Activated naive CD4-positive, alpha-beta T cell treated with anti-CD3 and anti-CD28 coated beads, Interleukin-2, amount 10 ng/mL, durations not matched to agents 7 days and 5 days (primary cell): ENCODE measurements at regions of chr3 and their contacts with region 1.

Region 1: DNA sequence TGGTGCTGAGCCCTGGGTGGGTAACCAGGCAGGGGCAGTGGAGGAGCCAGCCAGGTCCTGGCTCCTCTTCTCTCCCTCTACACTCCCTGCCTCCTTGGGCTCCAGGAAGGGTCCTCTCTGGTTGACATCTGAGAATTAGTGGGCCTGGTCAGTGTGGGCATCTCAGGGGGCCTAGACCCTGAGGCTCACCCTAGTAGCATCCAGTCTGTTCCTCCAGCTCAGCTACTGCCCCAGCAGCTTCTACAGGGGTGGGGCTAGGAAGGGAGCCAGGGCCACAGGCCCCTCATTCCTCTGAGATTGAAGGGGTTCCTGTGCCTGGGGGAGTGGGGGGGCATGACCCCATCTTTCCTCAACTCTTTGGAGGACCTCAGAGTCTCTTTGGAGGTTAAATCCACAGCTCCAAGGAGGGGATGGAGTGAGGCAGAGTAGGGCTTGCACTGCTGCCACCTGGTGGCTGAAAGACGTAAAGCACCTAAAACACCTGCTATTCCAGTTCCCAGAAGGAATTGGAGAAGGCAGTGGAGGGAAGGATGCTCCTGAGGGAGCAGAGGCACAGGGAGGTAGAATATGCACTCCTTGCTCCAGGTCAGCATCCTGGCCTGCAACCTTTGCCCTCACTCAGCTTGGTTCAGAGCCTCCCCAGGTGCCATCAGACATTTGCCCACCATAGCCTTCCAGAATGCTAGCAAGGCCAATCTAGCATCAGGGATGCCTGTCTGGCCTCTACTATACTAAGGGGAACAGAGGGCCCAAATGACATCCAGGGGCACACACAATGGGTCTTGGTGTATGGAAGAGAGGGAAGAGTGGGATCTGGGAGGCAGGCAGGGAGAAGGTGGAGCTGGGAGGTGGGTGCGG is 25.1 kb downstream of the C3orf18 start:
- DNase-seq: peak; percentile 72
- H3K4me3 Mint-ChIP-seq: no peak overlapping the region
- H3K27ac Mint-ChIP-seq: no peak overlapping the region
- H3K4me1 Mint-ChIP-seq: no peaks in the 10 kb centered on the region
- H3K27me3 Mint-ChIP-seq: peaks cover 69% of the 10 kb centered on the region

Region 2: GRCh38 chr3:50345586-50346235 is 196.7 kb before region 1 on chr3 and contains the start of gene ZMYND10:
- CTCF ChIA-PET with region 1: interaction called, 25 read pairs
- DNase-seq: peak; percentile 87
- H3K4me3 Mint-ChIP-seq: peak within 1 kb of the TSS; percentile 72
- H3K27ac Mint-ChIP-seq: peak within 1 kb of the TSS; percentile 80
- H3K4me1 Mint-ChIP-seq: peaks cover 81% of the 10 kb centered on the region
- H3K27me3 Mint-ChIP-seq: no peaks in the 10 kb centered on the region

Region 3: GRCh38 chr3:50350527-50351322 is 191.7 kb before region 1 on chr3 and contains the starts of genes CYB561D2 and NPRL2:
- CTCF ChIA-PET with region 1: interaction called, 25 read pairs
- DNase-seq: peak; percentile 100
- H3K4me3 Mint-ChIP-seq: peak within 1 kb of the TSS; percentile 80
- H3K27ac Mint-ChIP-seq: peak within 1 kb of the TSS; percentile 95
- H3K4me1 Mint-ChIP-seq: peaks cover 68% of the 10 kb centered on the region
- H3K27me3 Mint-ChIP-seq: no peaks in the 10 kb centered on the region

Region 4: DNA sequence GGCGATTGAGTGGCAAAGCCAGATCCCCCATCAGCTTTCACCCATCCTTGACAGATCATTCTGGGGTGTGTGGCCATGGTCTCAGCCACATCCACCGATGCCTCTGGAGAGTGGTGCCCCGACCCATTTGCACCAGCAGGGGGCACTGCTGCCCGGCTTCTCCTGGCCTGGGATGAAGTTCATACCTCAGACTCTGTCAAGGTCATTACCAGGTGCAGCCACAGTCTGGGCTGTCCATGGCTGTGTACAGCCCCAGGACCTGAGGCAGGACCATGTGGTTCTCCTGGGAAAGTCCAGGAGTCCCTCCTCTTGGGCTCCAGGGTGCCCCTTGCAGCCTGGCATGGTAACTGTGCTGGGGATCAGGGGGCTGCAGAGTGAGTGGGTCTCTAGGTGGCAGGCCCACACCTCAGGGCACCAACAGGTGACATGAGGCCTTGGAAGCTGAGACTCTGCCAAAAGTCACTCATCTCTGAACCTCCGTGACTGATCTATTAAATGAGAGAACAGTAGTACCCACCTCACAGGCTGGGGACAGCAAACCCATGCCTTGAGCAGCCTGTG is 106.2 kb before region 1 on chr3:
- CTCF ChIA-PET with region 1: interaction called, 90 read pairs
- DNase-seq: peak; percentile 88
- H3K4me3 Mint-ChIP-seq: no peak overlapping the region
- H3K27ac Mint-ChIP-seq: no peak overlapping the region
- H3K4me1 Mint-ChIP-seq: no peaks in the 10 kb centered on the region
- H3K27me3 Mint-ChIP-seq: peaks cover 50% of the 10 kb centered on the region

Region 5: DNA sequence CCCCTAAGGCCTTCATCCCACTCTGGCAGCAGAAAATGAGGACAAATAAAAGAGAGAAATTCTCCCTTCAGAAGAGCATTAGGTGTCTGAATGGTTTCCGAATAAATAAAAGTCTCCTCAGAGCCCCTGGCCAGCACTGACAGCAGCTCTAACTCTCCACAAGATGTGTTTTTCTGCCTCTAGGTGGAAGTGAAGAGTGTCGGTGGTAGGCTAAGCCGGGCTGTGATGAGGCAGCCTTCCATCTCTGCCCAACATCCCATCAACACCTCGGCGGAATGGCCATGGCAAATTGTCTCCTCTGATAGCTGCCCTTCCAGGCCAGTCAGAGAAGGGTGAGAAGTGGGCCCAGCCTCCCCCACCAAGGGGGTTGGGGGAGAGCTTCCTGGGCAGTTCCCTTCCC is 32.7 kb before region 1 on chr3:
- CTCF ChIA-PET with region 1: interaction called, 18 read pairs
- DNase-seq: no peak
- H3K4me3 Mint-ChIP-seq: no peak overlapping the region
- H3K27ac Mint-ChIP-seq: no peak overlapping the region
- H3K4me1 Mint-ChIP-seq: no peaks in the 10 kb centered on the region
- H3K27me3 Mint-ChIP-seq: peaks cover 72% of the 10 kb centered on the region

Region 6: GRCh38 chr3:50523279-50523811 is 19.1 kb before region 1 on chr3:
- CTCF ChIA-PET with region 1: interaction called, 21 read pairs
- DNase-seq: no peak
- H3K4me3 Mint-ChIP-seq: no peak overlapping the region
- H3K27ac Mint-ChIP-seq: no peak overlapping the region
- H3K4me1 Mint-ChIP-seq: peaks cover 9% of the 10 kb centered on the region
- H3K27me3 Mint-ChIP-seq: peaks cover 52% of the 10 kb centered on the region